Posterior cingulate gyrus (tissue), 11 donors: ENCODE measurements at regions of chr1 and their contacts with region 1.

Region 1: GRCh38 chr1:161225534-161226319 is at the start of gene TOMM40L:
- DNase-seq: peak; percentile 76 to 98 (median 88)

Region 2: DNA sequence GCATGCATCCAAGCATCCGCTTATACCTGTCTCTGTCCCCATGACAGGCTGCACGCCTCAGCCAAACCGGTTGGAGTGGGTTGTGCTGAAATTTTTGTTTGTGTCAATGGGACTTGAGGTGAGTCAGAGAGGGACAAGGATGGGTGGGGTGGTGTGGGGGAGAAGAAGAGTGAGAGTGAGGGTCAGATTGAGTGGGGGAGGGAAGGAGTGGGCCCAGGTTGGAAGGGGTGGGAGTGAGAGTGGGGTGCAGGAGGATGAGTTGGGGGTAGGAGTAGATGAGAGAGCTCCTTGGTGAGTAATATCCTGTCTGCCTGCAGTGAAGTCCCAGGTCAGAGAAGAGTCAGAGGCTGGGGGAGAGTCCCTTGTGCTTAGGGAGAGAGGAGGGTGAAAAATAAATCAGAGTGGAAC is 133.1 kb before region 1 on chr1:
- intact Hi-C with region 1: no loop called
- DNase-seq: no peak

Region 3: GRCh38 chr1:161177112-161177935 is 48.4 kb before region 1 on chr1 and contains the start of gene B4GALT3:
- intact Hi-C with region 1: loop called (anchors 10 kb)
- DNase-seq: peak; percentile 82 to 99 (median 94)

Region 4: DNA sequence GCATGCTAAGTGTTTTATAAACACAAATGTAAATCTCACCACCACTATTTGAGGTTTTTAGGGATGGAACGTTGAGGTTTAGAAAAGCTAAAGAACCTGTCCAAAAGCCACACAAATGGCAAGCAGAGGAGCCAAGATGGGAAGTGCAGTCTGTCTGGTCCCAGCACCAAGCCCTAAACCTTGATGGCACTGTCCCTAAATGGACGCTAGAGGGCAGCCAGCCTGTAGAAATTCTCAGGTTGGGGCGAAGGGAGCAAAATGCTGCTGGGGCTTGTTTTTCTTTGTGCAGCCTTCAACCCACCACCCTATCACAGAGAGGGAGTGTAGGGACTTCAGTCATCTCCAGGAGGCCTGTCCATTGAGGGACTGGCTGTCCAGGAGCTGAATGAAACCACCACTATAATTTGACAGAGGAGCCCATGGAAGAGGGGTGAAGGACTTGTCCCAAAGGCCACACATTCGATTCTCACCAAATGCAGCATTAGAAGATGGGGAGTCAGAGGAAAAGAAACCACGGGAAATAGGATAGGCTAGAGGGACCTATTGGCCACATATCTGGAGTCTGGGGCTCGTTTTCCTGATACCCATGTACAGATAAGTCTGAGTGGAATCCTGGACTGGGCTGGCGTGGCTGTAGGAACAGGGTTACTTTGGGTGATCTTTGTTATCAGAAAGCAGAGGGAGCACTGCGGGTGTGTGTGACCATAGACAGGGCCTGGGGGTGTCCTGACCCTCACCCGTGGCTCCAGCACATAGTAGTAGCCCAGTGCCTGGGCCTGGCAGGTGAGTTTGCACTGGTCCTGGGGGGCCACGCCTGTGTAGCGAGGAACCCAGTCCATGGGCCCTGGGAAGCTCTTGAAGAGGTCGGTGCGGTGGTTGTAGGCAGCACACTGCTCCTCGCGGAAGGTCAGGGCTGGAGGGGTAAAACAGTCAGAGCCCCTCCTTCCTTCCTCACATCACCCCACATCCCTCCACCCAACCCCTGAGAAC is 33.0 kb before region 1 on chr1:
- intact Hi-C with region 1: loop called (anchors 5 kb)
- DNase-seq: peak in 6 of 10 donors; percentile 67 to 94 (median 74)

Region 5: GRCh38 chr1:161290779-161291178 is 65.1 kb after region 1 on chr1:
- intact Hi-C with region 1: loop called (anchors 2 kb)
- DNase-seq: no peak

Region 6: GRCh38 chr1:161305867-161306519 is 80.3 kb after region 1 on chr1:
- intact Hi-C with region 1: loop called (anchors 5 kb)
- DNase-seq: peak; percentile 57 to 97 (median 80)

Region 7: GRCh38 chr1:161367684-161368400 is 142.1 kb after region 1 on chr1 and contains the start of gene CFAP126:
- intact Hi-C with region 1: loop called (anchors 1 kb)
- DNase-seq: peak in 6 of 10 donors; percentile 19 to 90 (median 47)

Region 8: GRCh38 chr1:161382214-161383019 is 156.7 kb after region 1 on chr1:
- intact Hi-C with region 1: loop called (anchors 2 kb)
- DNase-seq: no peak

Region 9: DNA sequence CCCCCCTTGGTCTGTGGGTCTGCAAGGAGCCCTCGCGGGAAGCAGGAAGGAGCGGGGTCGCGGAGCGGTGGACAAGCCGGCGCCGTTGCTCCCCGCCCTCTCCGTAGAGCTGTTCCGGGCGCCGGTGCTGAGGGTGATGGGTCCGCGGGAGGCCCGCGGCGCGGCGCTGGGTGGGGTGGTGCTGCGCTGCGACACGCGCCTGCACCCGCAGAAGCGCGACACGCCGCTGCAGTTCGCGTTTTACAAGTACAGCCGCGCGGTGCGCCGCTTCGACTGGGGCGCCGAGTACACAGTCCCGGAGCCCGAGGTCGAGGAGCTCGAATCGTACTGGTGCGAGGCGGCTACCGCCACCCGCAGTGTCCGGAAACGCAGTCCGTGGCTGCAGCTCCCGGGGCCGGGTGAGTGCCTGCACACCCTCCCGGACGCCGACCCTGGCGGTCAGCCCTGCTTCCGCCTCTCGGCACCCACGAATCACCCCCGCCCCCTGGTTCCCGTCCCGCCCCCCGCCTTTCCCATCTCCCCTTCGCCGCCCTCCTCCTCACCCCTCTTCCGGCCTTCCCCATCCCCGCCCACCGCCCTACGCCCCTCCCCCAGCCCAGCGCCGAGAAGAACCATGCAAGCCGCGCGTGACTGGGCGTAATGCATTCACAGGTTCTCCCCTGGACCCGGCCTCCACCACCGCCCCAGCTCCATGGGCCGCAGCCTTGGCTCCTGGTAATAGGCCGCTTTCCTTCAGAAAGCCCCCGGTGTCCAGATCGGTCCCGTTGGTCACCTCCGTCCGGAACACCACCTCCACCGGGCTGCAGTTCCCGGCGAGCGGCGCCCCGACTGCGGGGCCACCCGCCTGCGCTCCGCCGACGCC is 501.1 kb after region 1 on chr1:
- intact Hi-C with region 1: no loop called
- DNase-seq: peak; percentile 46 to 94 (median 72)